ENCODE measurements at regions of chr15 and their contacts with region 1.

Region 1: DNA sequence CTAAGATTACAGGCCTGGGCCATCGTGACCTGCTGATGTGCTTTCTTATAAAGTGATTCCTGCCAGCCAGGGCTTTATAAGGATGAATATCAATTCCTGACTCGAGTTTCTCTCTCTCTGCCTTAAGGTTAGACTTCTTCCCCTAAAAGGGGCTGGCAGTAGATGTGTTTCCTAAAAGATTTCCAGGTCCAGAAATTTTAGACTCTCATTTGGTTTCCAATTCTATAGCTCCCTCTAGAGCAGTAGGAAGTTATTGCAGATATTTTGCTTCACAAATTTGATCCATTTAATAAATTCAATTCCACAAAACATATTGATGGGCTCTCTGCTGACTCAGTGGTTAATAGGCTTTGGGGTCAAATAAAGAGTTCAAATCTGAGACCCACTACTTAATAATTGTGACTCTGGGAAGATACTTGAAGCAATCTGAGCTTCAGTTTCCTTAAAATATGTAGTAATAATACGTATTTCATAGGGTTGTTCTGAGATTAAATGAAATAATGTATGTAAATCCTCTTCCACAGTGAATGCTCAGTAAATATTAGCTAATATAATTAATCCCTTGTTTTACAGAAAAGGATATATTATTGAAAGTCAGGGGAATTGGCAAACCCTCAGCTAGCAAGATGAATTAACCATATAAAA is 2.1 kb downstream of the TRIM69 start:
- DNase-seq: peak; percentile 52
- CTCF ChIP-seq: peak; percentile 63

Region 2: GRCh38 chr15:44570361-44570760 is 168.1 kb before region 1 on chr15:
- CTCF ChIA-PET with region 1: interaction called, 50 read pairs
- POLR2A ChIA-PET with region 1: no interaction called
- DNase-seq: no peak
- CTCF ChIP-seq: no peak

Region 3: GRCh38 chr15:44593042-44593736 is 145.3 kb before region 1 on chr15:
- CTCF ChIA-PET with region 1: interaction called, 19 read pairs
- POLR2A ChIA-PET with region 1: no interaction called
- DNase-seq: no peak
- CTCF ChIP-seq: peak; percentile 32

Region 4: DNA sequence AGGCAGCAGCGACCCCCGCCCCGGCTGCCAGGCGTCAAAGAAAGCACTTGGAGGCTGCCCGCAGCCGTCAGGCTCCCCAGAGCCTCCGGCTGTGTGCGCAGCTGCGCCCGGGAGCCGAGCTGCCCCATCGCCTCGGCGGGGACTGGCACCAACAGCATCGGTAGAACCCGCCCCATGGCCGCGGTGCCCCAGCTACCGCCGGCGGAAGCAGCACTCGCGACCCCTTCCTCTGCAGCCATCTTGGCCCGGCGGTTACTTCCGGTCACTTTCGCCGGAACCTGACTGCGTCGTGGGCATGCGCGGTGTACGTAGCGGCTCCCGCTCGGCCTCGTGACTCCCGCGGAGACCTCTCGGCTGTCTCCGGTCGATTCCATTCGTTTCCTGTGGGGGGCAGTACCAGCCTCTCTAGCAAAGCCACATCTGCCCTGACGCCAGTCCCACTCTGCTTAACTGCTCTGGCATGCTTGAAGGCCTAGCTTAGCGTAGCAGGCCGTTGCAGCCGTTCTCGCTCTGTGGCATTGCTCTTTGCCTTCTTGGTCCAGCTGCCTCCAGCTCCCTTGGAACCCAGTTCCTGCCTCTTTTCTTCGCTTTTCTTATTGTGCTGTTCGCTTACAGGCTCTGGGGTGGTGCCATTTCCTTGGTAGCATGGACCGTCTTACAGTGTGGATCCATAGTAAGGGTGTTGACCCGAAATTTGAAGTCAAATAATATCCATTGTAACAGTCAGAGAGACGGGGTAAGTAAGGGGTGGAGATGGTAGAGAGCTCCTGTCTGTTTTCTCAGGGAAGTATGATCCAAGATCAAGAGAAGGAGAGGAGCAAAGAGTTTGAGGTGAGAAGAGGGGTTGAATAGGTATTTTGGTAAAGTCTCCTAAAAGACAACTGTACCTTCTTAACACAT is 74.8 kb before region 1 on chr15 and contains the start of gene SPG11:
- CTCF ChIA-PET with region 1: interaction called, 101 read pairs
- POLR2A ChIA-PET with region 1: interaction called, 8 read pairs
- DNase-seq: peak; percentile 92
- CTCF ChIP-seq: peak; percentile 88

Region 5: DNA sequence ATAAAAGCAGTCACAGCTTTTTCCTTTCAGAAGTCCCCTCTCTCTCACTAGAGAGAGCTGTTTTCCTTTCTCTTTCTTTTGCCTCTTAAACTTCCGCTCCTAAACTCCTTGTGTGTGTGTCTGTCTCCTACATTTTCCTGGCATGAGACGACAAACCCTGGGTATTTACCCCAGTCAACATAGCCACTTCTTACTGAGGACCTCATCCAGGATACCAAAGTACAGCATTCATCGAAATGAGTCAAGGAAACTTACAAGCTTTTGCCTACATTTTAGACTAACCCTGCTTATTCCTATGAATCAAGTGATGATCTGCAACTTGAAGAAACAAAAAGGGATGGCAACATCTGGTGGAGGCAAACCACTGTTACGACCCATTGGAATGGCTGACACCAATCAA is 44.0 kb before region 1 on chr15:
- CTCF ChIA-PET with region 1: no interaction called
- POLR2A ChIA-PET with region 1: no interaction called
- DNase-seq: no peak
- CTCF ChIP-seq: no peak

Region 6: DNA sequence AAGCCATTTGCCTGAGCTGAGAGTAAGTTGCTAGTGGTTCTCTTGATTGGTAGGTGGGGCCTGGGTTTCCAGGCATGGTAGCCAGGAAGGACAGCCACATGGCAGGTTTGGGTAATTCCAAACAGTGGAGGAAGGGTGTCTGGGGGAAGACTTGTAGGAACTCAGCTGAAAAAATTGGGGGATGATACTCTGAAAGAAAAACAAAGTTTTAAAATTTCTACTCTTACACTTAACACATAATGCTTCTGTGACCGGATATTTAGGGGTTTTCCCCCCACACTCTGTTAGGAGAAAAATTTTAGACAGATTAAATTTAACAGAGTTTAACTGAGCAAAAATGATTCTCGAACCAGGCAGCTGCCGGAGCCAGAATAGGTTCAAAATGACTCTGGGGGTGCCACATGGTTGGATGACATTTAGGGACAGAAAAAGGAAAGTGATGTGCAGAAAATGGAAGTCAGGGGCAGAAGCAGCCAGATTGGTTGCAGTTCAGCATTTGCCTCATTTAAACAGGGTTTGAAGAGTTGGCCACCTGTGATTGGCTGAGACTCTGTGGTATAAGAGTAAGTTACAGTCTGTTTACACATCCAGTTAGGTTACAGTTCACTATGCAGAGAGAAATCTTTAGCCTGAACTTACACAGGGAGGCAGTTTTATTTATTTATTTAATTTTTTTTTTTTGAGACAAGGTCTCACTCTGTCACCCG is 19.0 kb before region 1 on chr15:
- CTCF ChIA-PET with region 1: interaction called, 117 read pairs
- POLR2A ChIA-PET with region 1: interaction called, 41 read pairs
- DNase-seq: peak; percentile 37
- CTCF ChIP-seq: no peak

Region 7: GRCh38 chr15:44763187-44763586 is 24.7 kb after region 1 on chr15:
- CTCF ChIA-PET with region 1: interaction called, 11 read pairs
- POLR2A ChIA-PET with region 1: no interaction called
- DNase-seq: no peak
- CTCF ChIP-seq: no peak

Region 8: GRCh38 chr15:44836094-44836493 is 97.6 kb after region 1 on chr15:
- CTCF ChIA-PET with region 1: no interaction called
- POLR2A ChIA-PET with region 1: no interaction called
- DNase-seq: no peak
- CTCF ChIP-seq: no peak